Transverse colon (tissue), 4 donors: ENCODE measurements at regions of chr1 and their contacts with region 1.

Region 1: GRCh38 chr1:85307987-85308832 is 31.8 kb upstream of the BCL10 start:
- DNase-seq: peak; percentile 88
- H3K4me3 ChIP-seq: no peak overlapping the region
- H3K27ac ChIP-seq: no peak overlapping the region
- H3K4me1 ChIP-seq: peaks cover 0 to 9% (median 6%) of the 10 kb centered on the region in 4 donors
- H3K27me3 ChIP-seq: no peaks in the 10 kb centered on the region
- CTCF ChIP-seq: peak; percentile 89 to 95 (median 93)
- EP300 ChIP-seq: no peak
- POLR2A ChIP-seq: no peak

Region 2: DNA sequence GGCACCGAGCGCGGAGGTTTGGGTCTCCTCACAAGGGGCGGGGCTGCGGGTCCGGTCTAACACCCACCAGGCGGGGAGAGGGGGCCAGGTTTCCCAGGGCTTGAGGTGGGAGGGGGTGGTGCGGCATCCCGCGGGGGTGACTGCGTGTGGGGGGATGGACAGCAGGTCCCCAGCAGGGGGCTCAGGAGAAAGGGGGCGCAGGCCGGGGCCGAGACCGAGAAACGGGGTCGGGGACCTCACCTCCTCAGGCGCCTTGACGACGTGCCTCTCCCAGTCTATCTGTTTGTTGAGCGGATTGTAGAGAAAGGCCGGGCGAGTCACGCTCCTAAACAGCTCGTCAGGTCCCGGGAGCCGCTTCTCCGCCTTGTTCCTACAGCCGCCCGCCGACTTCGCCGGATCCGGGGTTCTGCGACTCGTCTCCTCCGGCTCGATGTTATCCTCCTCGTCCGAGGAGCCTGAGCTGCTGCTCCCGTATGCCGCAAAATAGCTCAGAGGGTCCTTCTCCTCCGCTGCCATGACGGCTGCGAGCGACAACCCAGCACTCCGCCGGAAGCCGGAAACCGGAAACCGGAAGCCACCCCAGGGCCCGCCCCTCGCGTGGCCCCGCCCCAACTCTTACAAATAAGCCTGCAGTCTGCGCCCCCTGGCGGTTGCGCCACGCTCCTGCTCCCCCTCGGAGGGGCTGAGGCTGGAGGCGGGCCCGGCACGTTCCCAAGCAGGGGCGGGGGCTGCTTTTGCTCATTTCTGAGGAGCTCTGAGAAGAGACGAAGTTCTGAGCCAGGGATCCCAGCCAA is 48.9 kb before region 1 on chr1 and contains the start of gene C1orf52:
- in situ Hi-C with region 1: no loop called
- intact Hi-C with region 1: no loop called
- DNase-seq: peak; percentile 95
- H3K4me3 ChIP-seq: peak within 1 kb of the TSS; percentile 64 to 94 (median 81)
- H3K27ac ChIP-seq: peak within 1 kb of the TSS; percentile 80 to 91 (median 88)
- H3K4me1 ChIP-seq: peaks cover 9 to 42% (median 28%) of the 10 kb centered on the region in 4 donors
- H3K27me3 ChIP-seq: no peaks in the 10 kb centered on the region
- CTCF ChIP-seq: peak; percentile 97 to 100 (median 99)
- EP300 ChIP-seq: no peak
- POLR2A ChIP-seq: peak; percentile 82
- total RNA-seq, gene C1orf52: 7.4 to 42.6 (median 14.9) TPM

Region 3: GRCh38 chr1:85494904-85495266 is 186.7 kb after region 1 on chr1:
- in situ Hi-C with region 1: loop called in 3 of 4 experiments (anchors 10 to 25 kb)
- intact Hi-C with region 1: no loop called
- DNase-seq: no peak
- H3K4me3 ChIP-seq: no peak overlapping the region
- H3K27ac ChIP-seq: no peak overlapping the region
- H3K4me1 ChIP-seq: no peaks in the 10 kb centered on the region
- H3K27me3 ChIP-seq: no peaks in the 10 kb centered on the region
- CTCF ChIP-seq: peak in 2 of 5 experiments; percentile 7 to 12
- EP300 ChIP-seq: no peak
- POLR2A ChIP-seq: no peak

Region 4: DNA sequence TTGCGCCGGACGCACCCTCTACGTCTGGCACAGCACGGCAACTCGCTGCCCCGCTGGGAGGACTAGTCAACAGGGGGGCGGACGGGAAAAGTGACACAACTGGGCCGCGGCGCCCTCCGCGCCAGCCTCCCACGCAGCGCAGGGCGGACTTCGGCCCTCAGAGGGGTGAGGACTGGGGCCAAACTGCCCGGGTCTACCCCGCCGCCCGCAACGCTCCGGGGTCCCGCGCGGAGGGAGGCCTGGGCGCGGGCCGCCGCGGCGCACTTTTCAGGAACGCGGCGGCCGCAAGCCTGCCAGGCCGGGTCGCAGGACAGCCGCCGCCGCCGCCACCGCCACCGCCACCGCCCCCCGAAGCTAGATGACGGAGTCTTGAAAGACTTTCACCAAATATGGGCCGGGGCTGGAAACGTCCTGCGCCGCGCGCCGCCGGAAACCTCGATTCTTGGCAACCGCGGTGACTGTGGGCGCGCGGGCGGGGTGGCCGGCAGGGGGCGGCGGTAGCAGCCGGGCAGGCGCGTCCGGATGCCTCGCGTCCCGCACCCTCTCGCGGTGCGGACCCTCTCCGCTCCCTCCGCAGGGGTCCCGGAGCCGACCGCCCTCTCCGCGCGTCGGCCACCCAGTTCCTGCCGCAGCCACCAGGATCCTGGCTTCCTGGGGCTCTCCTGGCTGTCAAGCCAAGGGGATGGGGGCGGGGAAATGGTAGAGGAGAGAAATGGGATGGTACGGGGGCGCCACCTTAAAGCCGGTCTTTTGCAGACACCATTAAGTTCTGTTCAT is 268.6 kb after region 1 on chr1:
- in situ Hi-C with region 1: loop called (anchors 25 kb)
- intact Hi-C with region 1: loop called (anchors 10 kb)
- DNase-seq: peak; percentile 78
- H3K4me3 ChIP-seq: peak overlapping the region; percentile 47 to 63 (median 55)
- H3K27ac ChIP-seq: peak overlapping the region; percentile 91 to 96 (median 92)
- H3K4me1 ChIP-seq: peaks cover 0 to 43% (median 17%) of the 10 kb centered on the region in 4 donors
- H3K27me3 ChIP-seq: peaks cover 39% of the 10 kb centered on the region
- CTCF ChIP-seq: peak; percentile 47 to 84 (median 76)
- EP300 ChIP-seq: no peak
- POLR2A ChIP-seq: peak; percentile 59

Region 5: DNA sequence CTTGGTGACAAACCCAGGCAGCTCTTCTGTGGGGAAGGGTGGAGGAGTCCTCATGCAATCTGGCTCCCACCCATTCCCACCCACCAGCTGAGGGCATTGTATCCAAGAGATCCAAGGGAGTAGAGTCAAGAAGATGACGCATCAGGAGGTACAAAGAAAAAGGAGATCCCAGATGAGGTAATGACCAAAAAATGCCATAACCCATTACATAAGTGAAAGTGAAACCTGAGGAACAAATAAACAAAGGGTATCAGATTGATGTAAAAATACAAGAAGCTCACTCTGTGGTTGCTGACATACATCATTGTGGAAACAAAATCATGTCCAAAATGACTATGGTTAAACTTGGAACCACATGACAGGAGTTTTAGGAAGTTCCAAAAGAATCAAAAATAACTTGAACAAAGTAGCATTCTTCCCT is 314.9 kb after region 1 on chr1:
- in situ Hi-C with region 1: no loop called
- intact Hi-C with region 1: no loop called
- DNase-seq: no peak
- H3K4me3 ChIP-seq: no peak overlapping the region
- H3K27ac ChIP-seq: no peak overlapping the region
- H3K4me1 ChIP-seq: no peaks in the 10 kb centered on the region
- H3K27me3 ChIP-seq: no peaks in the 10 kb centered on the region
- CTCF ChIP-seq: no peak
- EP300 ChIP-seq: no peak
- POLR2A ChIP-seq: no peak

Region 6: DNA sequence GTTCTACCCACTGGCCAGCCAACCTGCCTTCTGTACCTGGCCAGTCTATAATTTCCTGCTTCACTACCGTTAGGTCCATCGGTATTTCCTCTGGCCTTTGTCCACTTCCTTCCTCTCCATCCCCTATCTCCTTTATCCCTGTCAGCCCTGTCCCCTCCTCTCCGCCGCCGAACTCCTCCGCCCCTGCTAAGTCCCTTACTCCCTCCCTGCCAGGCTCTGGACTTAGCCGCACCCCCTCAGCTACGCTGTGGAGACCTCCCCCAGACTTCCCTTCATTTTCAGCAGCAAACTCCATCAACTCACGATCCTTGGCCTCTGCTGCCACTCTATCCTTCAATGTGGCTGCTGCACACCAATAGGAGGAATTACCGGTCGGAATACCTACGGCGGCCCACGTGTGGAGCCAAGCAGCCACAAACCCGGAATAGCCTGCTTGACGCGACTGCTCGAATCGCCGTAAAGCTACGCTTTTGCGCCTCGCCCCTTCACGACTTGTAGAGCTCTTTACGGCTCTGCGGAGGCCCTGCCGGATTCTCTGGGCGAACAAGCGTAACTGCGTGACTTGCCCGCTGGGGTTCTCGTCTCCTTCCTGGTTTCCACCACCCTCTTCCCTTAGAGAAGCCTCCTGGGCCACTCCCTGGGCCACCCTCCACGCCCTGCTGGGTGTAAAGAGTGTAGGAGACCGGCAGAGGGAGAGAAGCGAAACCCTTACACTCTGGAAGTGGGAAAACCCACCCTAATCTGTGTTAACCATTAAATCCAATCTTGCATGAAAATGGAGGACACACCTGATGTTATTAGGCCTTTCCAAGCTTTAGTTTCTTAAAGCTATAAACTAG is 400.0 kb after region 1 on chr1 and contains the start of gene ZNHIT6:
- in situ Hi-C with region 1: loop called in 3 of 4 experiments (anchors 10 kb)
- intact Hi-C with region 1: no loop called
- DNase-seq: peak; percentile 93
- H3K4me3 ChIP-seq: peak within 1 kb of the TSS; percentile 52 to 82 (median 66)
- H3K27ac ChIP-seq: peak within 1 kb of the TSS; percentile 89 to 91 (median 90)
- H3K4me1 ChIP-seq: peaks cover 3 to 21% (median 19%) of the 10 kb centered on the region in 4 donors
- H3K27me3 ChIP-seq: no peaks in the 10 kb centered on the region
- CTCF ChIP-seq: peak; percentile 33 to 71 (median 43)
- EP300 ChIP-seq: no peak
- POLR2A ChIP-seq: peak; percentile 62
- total RNA-seq, gene ZNHIT6: 2.6 to 7.8 (median 4.8) TPM

Region 7: GRCh38 chr1:86156566-86157455 is 848.6 kb after region 1 on chr1 and contains the start of gene COL24A1:
- in situ Hi-C with region 1: loop called in 1 of 4 experiments (anchors 25 kb)
- intact Hi-C with region 1: no loop called
- DNase-seq: peak; percentile 14
- H3K4me3 ChIP-seq: peak within 1 kb of the TSS in 3 of 4 donors; percentile 27 to 50 (median 30)
- H3K27ac ChIP-seq: peak within 1 kb of the TSS; percentile 49 to 71 (median 54)
- H3K4me1 ChIP-seq: peaks cover 3 to 26% (median 14%) of the 10 kb centered on the region in 4 donors
- H3K27me3 ChIP-seq: peaks cover 44% of the 10 kb centered on the region
- CTCF ChIP-seq: no peak
- EP300 ChIP-seq: no peak
- POLR2A ChIP-seq: no peak
- total RNA-seq, gene COL24A1: 0.68 to 1.2 (median 0.93) TPM